BJ (cell line): ENCODE measurements at regions of chr1 and their contacts with region 1.

Region 1: GRCh38 chr1:204763706-204764427 is 78.3 kb upstream of the LRRN2 start:
- DNase-seq: peak; percentile 8
- H3K4me3 ChIP-seq: no peak overlapping the region
- H3K27me3 ChIP-seq: peaks cover 14% of the 10 kb centered on the region
- CTCF ChIP-seq: peak; percentile 88

Region 2: GRCh38 chr1:204746838-204747442 is 16.9 kb before region 1 on chr1:
- CTCF ChIA-PET with region 1: interaction called, 35 read pairs
- POLR2A ChIA-PET with region 1: no interaction called
- DNase-seq: no peak
- H3K4me3 ChIP-seq: no peak overlapping the region
- H3K27me3 ChIP-seq: peaks cover 12% of the 10 kb centered on the region
- CTCF ChIP-seq: peak; percentile 98

Region 3: DNA sequence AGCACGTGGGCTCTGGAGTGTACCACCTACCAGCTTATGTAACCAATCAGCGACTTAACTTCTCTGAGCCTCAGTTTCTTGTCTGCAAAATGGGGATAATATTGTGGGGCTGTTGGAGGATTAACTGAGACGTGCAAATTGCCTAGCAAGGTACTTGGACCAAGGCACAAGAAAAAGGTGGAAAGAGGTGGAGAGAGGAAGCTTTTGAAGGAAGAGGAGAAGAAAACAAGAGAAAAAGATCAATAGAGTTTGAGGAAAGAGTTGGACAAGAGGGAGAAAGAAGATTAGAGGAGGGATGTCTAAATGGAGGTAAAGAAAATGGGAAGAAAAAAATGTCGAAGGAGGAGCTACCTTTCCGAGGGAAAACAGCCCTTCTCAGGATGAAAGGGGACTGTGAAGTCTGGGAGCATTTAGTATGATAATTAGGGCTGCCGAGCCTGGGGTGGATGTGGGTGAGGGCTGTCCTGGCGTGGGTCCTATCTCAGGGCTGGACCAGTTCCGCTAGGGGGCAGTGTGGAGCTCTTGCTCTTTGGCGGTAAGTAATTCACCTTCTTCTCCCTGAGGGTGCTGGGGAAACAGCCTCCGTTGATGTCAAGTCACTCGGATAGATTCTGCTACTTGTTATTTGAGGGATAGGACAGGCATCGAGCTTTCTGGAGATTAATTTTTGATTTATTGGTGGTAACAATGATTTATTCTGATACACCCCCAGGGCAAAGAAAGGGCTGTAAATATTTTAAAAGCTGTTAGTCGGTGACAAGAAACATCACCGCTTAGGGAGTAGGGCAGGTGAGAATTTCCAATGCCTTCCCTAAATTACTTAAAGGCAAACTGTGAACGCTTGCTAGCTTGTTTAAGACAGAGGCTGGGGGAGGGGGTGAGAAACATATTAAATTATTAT is 27.8 kb after region 1 on chr1:
- CTCF ChIA-PET with region 1: interaction called, 12 read pairs
- POLR2A ChIA-PET with region 1: no interaction called
- DNase-seq: no peak
- H3K4me3 ChIP-seq: no peak overlapping the region
- H3K27me3 ChIP-seq: peaks cover 11% of the 10 kb centered on the region
- CTCF ChIP-seq: peak; percentile 88